Activated B cell treated with CpG ODN at 0.5 μM for 24 hours (primary cell): ENCODE measurements at regions of chr2 and their contacts with region 1.

Region 1: GRCh38 chr2:16665748-16666448 is at the start of gene CYRIA:
- DNase-seq: peak; percentile 70
- ATAC-seq: peak; percentile 69
- H3K4me3 Mint-ChIP-seq: peak within 1 kb of the TSS; percentile 97
- H3K27ac Mint-ChIP-seq: peak within 1 kb of the TSS; percentile 96
- H3K4me1 Mint-ChIP-seq: peaks cover 58% of the 10 kb centered on the region
- H3K27me3 Mint-ChIP-seq: no peaks in the 10 kb centered on the region
- CTCF ChIP-seq: no peak
- total RNA-seq, gene CYRIA: 72.7 and 76.1 TPM in 2 replicates

Region 2: DNA sequence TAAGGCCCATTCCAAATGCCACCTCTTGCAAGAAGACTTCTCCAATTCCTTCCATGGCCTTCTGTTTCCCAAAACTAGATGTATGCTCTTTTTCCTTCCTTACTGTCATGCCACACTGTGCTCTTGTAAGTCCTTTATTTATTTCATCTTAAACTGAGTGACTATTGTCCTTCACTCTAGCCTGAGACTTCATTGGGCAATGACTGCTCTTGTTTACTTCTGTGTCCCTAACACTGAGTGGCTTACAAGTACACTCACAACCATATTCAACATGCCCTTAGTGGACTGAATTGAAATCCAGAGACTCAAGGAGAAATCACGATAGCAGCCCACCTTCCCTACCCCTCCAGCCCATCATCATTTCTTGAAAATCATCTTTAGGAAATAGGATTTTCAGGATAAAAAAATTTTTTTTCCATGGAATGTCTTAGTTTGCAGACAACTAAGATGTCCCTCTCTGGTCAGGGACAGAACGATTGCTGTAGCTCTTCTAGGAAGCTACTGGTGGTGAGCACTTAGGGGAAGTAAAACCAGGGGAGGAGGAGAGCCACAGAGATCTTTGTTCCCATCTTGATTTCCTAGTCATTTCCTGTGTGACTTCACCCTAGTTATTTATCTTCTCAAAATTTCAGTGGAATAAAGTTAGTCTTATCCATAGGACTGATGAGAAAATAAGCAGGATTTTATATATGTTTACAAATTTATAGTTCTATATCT is 80.9 kb before region 1 on chr2:
- CTCF ChIA-PET with region 1: no interaction called
- POLR2A ChIA-PET with region 1: no interaction called
- intact Hi-C with region 1: no loop called
- DNase-seq: no peak
- ATAC-seq: no peak
- H3K4me3 Mint-ChIP-seq: no peak overlapping the region
- H3K27ac Mint-ChIP-seq: no peak overlapping the region
- H3K4me1 Mint-ChIP-seq: peaks cover 28% of the 10 kb centered on the region
- H3K27me3 Mint-ChIP-seq: no peaks in the 10 kb centered on the region
- CTCF ChIP-seq: no peak

Region 3: GRCh38 chr2:16650287-16651249 is 15.3 kb before region 1 on chr2:
- CTCF ChIA-PET with region 1: interaction called, 6 read pairs
- POLR2A ChIA-PET with region 1: interaction called, 48 read pairs
- intact Hi-C with region 1: loop called (anchors 1 kb)
- DNase-seq: no peak
- ATAC-seq: peak; percentile 56
- H3K4me3 Mint-ChIP-seq: peak overlapping the region; percentile 77
- H3K27ac Mint-ChIP-seq: peak overlapping the region; percentile 95
- H3K4me1 Mint-ChIP-seq: peaks cover 98% of the 10 kb centered on the region
- H3K27me3 Mint-ChIP-seq: no peaks in the 10 kb centered on the region
- CTCF ChIP-seq: no peak

Region 4: GRCh38 chr2:16680304-16680703 is 14.4 kb after region 1 on chr2:
- CTCF ChIA-PET with region 1: no interaction called
- POLR2A ChIA-PET with region 1: no interaction called
- intact Hi-C with region 1: loop called (anchors 2 kb)
- DNase-seq: no peak
- ATAC-seq: no peak
- H3K4me3 Mint-ChIP-seq: no peak overlapping the region
- H3K27ac Mint-ChIP-seq: no peak overlapping the region
- H3K4me1 Mint-ChIP-seq: peaks cover 15% of the 10 kb centered on the region
- H3K27me3 Mint-ChIP-seq: no peaks in the 10 kb centered on the region
- CTCF ChIP-seq: no peak

Region 5: GRCh38 chr2:16700551-16701259 is 34.8 kb after region 1 on chr2:
- CTCF ChIA-PET with region 1: no interaction called
- POLR2A ChIA-PET with region 1: no interaction called
- intact Hi-C with region 1: no loop called
- DNase-seq: no peak
- ATAC-seq: no peak
- H3K4me3 Mint-ChIP-seq: no peak overlapping the region
- H3K27ac Mint-ChIP-seq: no peak overlapping the region
- H3K4me1 Mint-ChIP-seq: no peaks in the 10 kb centered on the region
- H3K27me3 Mint-ChIP-seq: no peaks in the 10 kb centered on the region
- CTCF ChIP-seq: no peak

Region 6: GRCh38 chr2:16713011-16713423 is 47.1 kb after region 1 on chr2:
- CTCF ChIA-PET with region 1: interaction called, 3 read pairs
- POLR2A ChIA-PET with region 1: no interaction called
- intact Hi-C with region 1: loop called (anchors 1 kb)
- DNase-seq: no peak
- ATAC-seq: peak; percentile 80
- H3K4me3 Mint-ChIP-seq: peak overlapping the region; percentile 72
- H3K27ac Mint-ChIP-seq: peak overlapping the region; percentile 90
- H3K4me1 Mint-ChIP-seq: peaks cover 58% of the 10 kb centered on the region
- H3K27me3 Mint-ChIP-seq: no peaks in the 10 kb centered on the region
- CTCF ChIP-seq: no peak

Region 7: DNA sequence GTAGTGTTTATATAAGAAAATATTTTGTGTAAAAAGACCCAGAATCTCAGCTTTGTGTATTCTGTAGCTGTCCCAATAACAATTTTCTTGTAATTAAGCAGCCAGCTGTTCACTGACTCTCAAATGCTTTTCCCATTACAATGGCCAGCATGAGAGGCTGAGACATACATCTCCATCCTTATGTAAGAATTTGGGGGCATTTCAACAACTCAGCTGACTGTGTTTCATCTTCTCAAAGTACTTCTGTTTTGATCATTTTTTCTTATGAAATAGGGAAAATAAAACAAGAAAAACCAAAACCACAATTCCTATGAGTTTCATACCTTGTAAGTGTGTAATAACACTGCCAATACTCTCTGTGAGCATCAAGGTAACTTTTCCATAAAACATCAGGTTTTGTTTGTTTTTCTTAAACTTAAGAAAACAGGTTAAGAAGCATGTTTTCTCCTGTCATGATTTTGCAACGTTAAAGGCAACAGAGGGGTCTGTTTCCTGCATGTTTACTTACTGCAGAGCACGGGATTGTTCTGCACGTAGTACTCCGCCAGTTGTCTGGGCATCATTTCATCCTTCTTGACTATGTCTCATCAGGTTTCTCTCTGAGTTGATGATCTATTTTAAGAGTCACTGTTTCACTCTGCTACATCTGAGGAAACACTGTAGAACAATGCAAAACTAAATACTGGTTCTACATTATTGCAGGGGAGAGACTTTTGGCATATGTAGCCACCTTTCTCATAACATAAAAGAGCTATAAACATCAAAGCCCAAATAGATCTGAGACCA is 62.6 kb after region 1 on chr2:
- CTCF ChIA-PET with region 1: no interaction called
- POLR2A ChIA-PET with region 1: interaction called, 3 read pairs
- intact Hi-C with region 1: loop called (anchors 1 kb)
- DNase-seq: no peak
- ATAC-seq: peak; percentile 35
- H3K4me3 Mint-ChIP-seq: peak overlapping the region; percentile 25
- H3K27ac Mint-ChIP-seq: peak overlapping the region; percentile 51
- H3K4me1 Mint-ChIP-seq: peaks cover 39% of the 10 kb centered on the region
- H3K27me3 Mint-ChIP-seq: no peaks in the 10 kb centered on the region
- CTCF ChIP-seq: no peak